ENCODE measurements at regions of chr9 and their contacts with region 1.

Region 1: DNA sequence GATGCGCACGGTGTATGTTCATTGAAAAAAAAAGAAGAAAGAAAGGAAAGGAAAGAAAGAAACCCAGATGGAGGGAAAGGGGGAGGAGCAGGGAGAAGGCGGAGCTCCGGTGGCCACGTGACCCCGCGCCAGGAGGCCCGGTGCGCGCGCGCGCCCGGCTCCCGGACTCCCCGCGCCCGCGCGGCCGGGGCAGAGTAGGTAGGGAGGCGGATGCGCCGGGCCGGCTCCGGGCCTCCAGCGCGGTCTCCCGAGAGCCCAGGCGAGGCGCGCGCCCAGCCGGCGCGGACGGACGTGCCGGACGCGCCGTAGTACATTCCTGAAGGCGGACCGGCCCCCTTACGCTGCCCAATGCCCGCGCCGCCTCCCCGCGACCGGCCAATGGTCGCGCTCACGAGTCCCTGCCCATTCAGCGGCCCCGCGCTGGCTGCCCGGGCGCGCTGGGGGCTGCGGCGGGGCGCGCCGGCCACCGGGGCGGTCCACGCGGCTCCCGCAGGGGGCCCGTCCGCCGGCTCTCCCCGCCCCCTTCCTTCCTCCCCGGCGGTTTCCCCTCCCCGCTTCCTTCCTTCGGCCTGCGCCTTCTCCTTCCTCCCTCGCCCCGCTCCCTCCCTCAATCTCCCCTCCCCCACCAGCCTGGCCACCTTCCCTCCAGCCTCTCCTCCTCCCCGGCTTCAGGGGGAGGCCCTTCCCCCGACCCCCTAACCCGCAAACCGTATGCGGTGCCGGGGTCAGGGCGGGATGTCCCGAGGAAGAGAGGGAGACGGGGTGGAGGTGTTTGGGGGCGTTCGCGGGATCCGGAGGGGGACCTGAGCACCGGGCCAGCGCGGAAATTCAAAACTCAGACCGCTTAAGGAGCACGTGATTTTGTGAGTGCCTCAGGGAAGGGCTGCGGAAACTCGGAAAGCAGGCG is 5.8 kb downstream of the PTCH1 start:
- DNase-seq: peak; percentile 96
- H3K4me3 ChIP-seq: peak overlapping the region; percentile 58 to 86 (median 76)
- H3K27ac ChIP-seq: peak overlapping the region; percentile 88 to 96 (median 93)
- H3K4me1 ChIP-seq: peaks cover 0 to 30% (median 16%) of the 10 kb centered on the region in 4 donors
- H3K27me3 ChIP-seq: peaks cover 0 to 6% (median 0%) of the 10 kb centered on the region in 3 donors
- CTCF ChIP-seq: no peak
- EP300 ChIP-seq: no peak
- POLR2A ChIP-seq: no peak

Region 2: DNA sequence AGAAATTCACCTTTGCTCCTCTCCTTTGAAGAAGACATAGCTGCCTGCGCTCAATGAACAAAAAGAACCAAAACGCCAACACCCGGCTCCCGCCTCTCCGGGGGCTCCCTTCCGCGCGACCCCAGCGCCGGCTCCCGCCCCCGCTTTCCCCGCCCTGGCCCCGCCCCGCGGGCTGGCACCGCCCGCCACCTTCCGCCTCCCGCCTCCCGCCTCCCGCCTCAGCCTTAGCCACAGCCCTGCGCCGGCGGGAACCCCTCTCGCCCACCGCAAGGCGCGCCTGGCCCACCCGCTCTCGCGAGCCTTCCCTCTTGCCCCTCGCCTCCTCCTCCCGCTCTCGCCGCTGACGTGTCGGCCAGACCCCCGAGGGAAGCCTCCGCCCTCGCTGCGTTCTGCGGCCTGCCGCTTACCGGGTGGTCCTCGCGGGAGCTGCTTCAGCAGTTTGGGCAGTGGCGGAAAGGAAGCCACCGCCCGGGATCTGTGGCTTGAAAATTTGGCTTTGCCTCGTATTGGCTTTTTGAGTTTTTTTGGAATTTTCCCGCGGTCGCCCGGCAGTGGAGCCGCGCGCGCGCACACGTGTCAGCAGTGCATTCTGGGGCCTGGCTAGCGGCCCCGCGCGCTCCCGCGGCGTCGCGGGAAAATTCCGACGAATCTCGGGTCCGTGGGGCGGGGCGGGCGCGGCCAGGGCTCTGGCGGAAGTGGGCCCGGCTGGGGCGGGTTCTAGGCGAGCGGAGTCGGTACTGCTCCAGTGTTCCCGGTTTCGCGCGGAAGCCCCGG is 193.7 kb before region 1 on chr9 and contains the start of gene FANCC:
- intact Hi-C with region 1: loop called (anchors 2 kb)
- DNase-seq: peak; percentile 95
- H3K4me3 ChIP-seq: peak within 1 kb of the TSS; percentile 76 to 99 (median 79)
- H3K27ac ChIP-seq: peak within 1 kb of the TSS; percentile 91 to 99 (median 94)
- H3K4me1 ChIP-seq: peaks cover 0 to 13% (median 5%) of the 10 kb centered on the region in 4 donors
- H3K27me3 ChIP-seq: no peaks in the 10 kb centered on the region
- CTCF ChIP-seq: no peak
- EP300 ChIP-seq: peak in 1 of 4 donors; percentile 42
- POLR2A ChIP-seq: no peak
- total RNA-seq, gene FANCC: 3.9 to 10.6 (median 5.3) TPM

Region 3: DNA sequence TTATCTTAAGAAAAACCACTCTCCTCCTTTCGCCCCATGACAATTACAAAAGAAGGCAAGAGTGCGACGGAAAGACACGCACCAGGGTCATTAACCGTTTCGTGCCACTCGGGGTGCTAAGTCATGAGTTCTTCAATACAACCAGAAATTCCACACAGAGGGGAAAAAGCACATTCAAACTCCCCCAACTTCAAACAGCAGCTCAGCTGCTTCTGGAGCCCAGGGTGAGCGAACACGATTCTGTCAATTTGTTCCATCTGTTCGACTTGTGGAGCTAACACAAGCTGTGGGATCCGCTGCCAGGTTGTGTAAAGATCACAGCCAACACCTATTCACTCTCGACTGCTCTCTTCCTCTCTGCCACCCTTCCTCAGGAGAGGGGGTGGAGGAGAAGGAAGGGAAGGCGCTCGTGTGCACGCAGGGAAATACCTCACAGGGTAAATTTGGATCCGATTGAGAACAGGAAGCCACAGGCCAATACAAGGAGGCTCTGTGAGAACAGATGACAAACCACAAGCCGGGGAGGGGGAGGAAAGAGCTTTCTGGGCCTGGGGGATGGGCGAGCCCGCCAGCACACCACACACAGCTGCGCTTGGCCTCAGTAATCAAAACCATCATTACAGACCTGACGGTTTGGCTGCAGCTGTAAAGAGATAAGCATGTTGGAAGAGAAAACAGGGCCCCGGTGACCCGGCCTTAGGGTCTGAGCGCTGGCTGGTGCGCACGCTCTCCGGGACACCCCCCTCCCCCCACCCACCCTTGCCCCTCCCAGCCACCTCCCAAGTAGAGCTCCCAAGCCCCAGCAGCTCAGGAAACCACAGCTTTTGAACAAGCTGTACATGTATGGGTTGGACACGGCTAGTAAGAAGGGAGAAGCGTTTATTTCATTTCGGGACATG is 48.5 kb before region 1 on chr9:
- intact Hi-C with region 1: loop called (anchors 2 kb)
- DNase-seq: peak; percentile 85
- H3K4me3 ChIP-seq: peak overlapping the region in 3 of 4 donors; percentile 11 to 30 (median 30)
- H3K27ac ChIP-seq: peak overlapping the region; percentile 38 to 79 (median 64)
- H3K4me1 ChIP-seq: peaks cover 0 to 68% (median 60%) of the 10 kb centered on the region in 4 donors
- H3K27me3 ChIP-seq: no peaks in the 10 kb centered on the region
- CTCF ChIP-seq: no peak
- EP300 ChIP-seq: no peak
- POLR2A ChIP-seq: no peak

Region 4: GRCh38 chr9:96025995-96026602 is 515.1 kb after region 1 on chr9:
- intact Hi-C with region 1: loop called (anchors 2 kb)
- DNase-seq: no peak
- H3K4me3 ChIP-seq: no peak overlapping the region
- H3K27ac ChIP-seq: no peak overlapping the region
- H3K4me1 ChIP-seq: peaks cover 0 to 35% (median 30%) of the 10 kb centered on the region in 4 donors
- H3K27me3 ChIP-seq: peaks cover 15 to 49% (median 26%) of the 10 kb centered on the region in 3 donors
- CTCF ChIP-seq: no peak
- EP300 ChIP-seq: no peak
- POLR2A ChIP-seq: no peak